ENCODE measurements at regions of chr6 and their contacts with region 1.

Region 1: DNA sequence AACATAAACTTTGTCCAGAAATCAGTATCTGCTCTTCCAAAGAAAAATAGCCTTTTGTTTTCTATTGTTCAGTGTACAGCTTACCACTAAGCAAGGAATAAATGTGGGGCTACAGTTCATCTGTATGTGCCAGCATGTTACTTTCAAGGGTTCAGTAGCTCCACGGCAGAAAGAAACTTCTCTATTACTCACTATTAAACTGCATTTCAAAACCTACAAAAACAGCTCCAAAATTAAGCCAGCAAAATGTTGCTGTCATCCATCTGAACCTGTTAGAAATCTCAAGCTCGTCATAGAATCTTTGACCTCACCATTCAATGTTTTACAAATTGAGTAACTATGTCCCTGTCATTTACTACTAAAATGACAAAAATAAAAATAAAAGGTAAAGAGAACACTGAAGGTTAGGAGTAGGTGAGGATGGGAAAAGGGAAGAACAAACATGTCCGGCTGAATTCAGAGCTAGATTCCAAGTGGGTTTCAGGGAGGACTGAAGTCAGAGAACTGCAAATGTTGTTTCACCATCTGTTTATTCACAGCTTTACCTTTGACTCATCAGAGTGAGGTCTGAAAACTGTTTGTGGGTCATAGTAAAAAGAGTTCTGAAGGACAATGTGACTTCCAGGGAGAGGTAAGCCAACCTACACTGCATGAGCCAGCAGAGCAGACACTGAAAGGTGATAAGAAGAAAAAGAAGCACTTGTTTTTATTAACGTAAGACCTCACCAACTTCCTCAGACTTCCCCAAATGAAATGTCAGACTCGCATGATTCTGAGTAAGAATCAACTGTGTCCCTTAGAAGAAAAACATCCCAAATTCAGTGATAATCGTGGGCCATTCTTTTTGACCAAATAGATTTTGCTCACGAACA is 62.0 kb downstream of the ATXN1 start:
- DNase-seq: no peak
- ATAC-seq: peak; percentile 79
- H3K4me3 ChIP-seq: peak overlapping the region in 1 of 2 experiments; percentile 29; a peak in 2 of 4 replicates
- H3K27ac ChIP-seq: peak overlapping the region; percentile 91
- H3K4me1 ChIP-seq: peaks cover 48% of the 10 kb centered on the region
- H3K27me3 ChIP-seq: no peaks in the 10 kb centered on the region
- CTCF ChIP-seq: no peak

Region 2: GRCh38 chr6:16625291-16626265 is 73.7 kb before region 1 on chr6:
- CTCF ChIA-PET with region 1: interaction called, 11 read pairs
- POLR2A ChIA-PET with region 1: no interaction called
- in situ Hi-C with region 1: no loop called
- intact Hi-C with region 1: no loop called
- DNase-seq: no peak
- ATAC-seq: no peak
- H3K4me3 ChIP-seq: no peak overlapping the region
- H3K27ac ChIP-seq: no peak overlapping the region
- H3K4me1 ChIP-seq: peaks cover 26% of the 10 kb centered on the region
- H3K27me3 ChIP-seq: no peaks in the 10 kb centered on the region
- CTCF ChIP-seq: no peak

Region 3: GRCh38 chr6:17202526-17202925 is 503.3 kb after region 1 on chr6:
- CTCF ChIA-PET with region 1: no interaction called
- POLR2A ChIA-PET with region 1: no interaction called
- in situ Hi-C with region 1: no loop called
- intact Hi-C with region 1: no loop called
- DNase-seq: no peak
- ATAC-seq: no peak
- H3K4me3 ChIP-seq: no peak overlapping the region
- H3K27ac ChIP-seq: no peak overlapping the region
- H3K4me1 ChIP-seq: no peaks in the 10 kb centered on the region
- H3K27me3 ChIP-seq: no peaks in the 10 kb centered on the region
- CTCF ChIP-seq: no peak

Measured in Panc1 (cell line).